Aorta (tissue), 5 donors: ENCODE measurements at regions of chr7 and their contacts with region 1.

Region 1: GRCh38 chr7:100691676-100692577 is 2.1 kb downstream of the GIGYF1 start:
- DNase-seq: peak; percentile 83 to 94
- ATAC-seq: peak; percentile 87
- H3K4me3 ChIP-seq: no peak overlapping the region
- H3K27ac ChIP-seq: no peak overlapping the region
- H3K4me1 ChIP-seq: no peaks in the 10 kb centered on the region
- H3K27me3 ChIP-seq: no peaks in the 10 kb centered on the region

Region 2: GRCh38 chr7:99975782-99976521 is 716.0 kb before region 1 on chr7 and contains the start of gene AZGP1:
- intact Hi-C with region 1: no loop called
- DNase-seq: no peak
- ATAC-seq: no peak
- H3K4me3 ChIP-seq: no peak within 1 kb of the TSS
- H3K27ac ChIP-seq: no peak within 1 kb of the TSS
- H3K4me1 ChIP-seq: no peaks in the 10 kb centered on the region
- H3K27me3 ChIP-seq: no peaks in the 10 kb centered on the region
- total RNA-seq, gene AZGP1: 0.63 to 1.3 TPM

Region 3: GRCh38 chr7:100469227-100470044 is 222.5 kb before region 1 on chr7:
- intact Hi-C with region 1: loop called (anchors 5 kb)
- DNase-seq: peak; percentile 91 to 97
- ATAC-seq: peak; percentile 91
- H3K4me3 ChIP-seq: no peak overlapping the region
- H3K27ac ChIP-seq: no peak overlapping the region
- H3K4me1 ChIP-seq: no peaks in the 10 kb centered on the region
- H3K27me3 ChIP-seq: no peaks in the 10 kb centered on the region

Region 4: DNA sequence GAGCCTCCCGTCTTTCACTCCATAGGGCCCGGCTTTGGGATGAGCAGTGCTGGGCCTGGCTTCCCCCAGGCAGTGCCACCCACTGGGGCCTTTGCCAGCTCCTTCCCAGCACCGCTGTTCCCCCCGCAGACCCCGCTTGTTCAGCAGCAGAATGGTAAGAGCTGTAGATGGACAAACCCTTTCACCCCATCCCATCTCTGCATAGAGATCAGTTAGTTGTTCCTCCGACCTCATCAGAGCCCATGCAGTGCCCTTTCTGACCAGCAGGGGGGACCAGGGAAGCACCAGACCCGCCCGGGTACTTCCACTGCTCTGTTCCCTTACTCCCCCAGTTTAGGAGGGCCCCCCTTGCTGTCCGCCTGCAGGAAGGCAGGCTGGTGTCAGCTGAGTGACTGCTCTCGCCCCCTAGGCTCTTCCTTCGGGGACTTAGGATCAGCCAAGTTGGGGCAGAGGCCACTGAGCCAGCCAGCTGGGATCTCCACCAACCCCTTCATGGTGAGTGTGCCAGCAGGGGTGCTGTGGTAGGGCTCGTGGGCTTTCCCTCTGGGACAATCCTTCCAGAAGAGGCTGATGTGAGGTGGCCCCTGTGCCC is 128.0 kb before region 1 on chr7:
- intact Hi-C with region 1: loop called (anchors 2 kb)
- DNase-seq: peak; percentile 88 to 95
- ATAC-seq: peak; percentile 79
- H3K4me3 ChIP-seq: no peak overlapping the region
- H3K27ac ChIP-seq: no peak overlapping the region
- H3K4me1 ChIP-seq: no peaks in the 10 kb centered on the region
- H3K27me3 ChIP-seq: no peaks in the 10 kb centered on the region

Region 5: DNA sequence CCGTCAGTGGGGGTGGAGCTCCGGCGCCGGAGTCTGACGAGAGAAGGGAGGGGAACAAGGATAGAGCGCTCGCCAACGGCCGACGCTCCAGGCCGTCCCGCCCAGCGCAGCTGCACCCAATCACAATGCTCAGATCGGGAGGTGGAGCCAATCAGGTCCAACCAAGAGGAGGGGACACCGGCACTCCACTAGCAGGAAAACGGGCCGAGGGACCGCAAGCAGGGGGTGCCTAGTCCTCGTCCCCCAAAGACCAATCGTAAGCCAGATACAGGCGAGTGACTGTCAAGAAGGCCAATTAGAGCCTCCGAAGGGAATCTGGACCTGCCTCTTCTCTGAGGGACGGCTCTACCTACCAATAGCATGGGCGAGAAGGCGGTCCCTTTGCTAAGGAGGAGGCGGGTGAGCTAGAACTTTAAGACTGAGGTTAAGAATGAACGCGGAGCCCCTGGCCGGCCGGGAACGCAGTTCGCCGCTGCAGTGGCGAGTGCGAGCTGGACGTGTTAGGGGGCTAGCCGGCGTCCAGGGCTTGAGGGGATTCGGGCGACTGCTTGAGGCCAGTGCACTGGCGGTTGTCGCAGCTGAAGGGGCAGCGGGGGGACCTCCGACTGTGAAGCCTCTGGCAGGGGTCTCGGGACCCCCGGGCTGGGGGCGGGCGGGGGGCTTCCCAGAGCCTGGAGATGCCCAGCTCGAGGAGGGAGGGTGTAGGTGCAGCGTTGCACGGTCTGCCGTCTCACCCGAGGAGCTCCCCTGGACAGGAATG is 105.5 kb before region 1 on chr7 and contains the start of gene FBXO24:
- intact Hi-C with region 1: loop called in 1 of 2 experiments (anchors 5 kb)
- DNase-seq: peak; percentile 100
- ATAC-seq: peak; percentile 98
- H3K4me3 ChIP-seq: peak within 1 kb of the TSS; percentile 57 to 85
- H3K27ac ChIP-seq: peak within 1 kb of the TSS in 1 of 2 donors; percentile 72
- H3K4me1 ChIP-seq: no peaks in the 10 kb centered on the region
- H3K27me3 ChIP-seq: no peaks in the 10 kb centered on the region
- total RNA-seq, gene FBXO24: 0.81 TPM in 1 of 2 donors, not detected in the other

Region 6: GRCh38 chr7:100611974-100612729 is 79.8 kb before region 1 on chr7 and contains the start of gene MOSPD3:
- intact Hi-C with region 1: loop called in 1 of 2 experiments (anchors 5 kb)
- DNase-seq: peak; percentile 99 to 100
- ATAC-seq: peak; percentile 98
- H3K4me3 ChIP-seq: peak within 1 kb of the TSS; percentile 58 to 62
- H3K27ac ChIP-seq: peak within 1 kb of the TSS in 1 of 2 donors; percentile 87
- H3K4me1 ChIP-seq: no peaks in the 10 kb centered on the region
- H3K27me3 ChIP-seq: no peaks in the 10 kb centered on the region
- total RNA-seq, gene MOSPD3: 15.1 to 19.1 TPM

Region 7: DNA sequence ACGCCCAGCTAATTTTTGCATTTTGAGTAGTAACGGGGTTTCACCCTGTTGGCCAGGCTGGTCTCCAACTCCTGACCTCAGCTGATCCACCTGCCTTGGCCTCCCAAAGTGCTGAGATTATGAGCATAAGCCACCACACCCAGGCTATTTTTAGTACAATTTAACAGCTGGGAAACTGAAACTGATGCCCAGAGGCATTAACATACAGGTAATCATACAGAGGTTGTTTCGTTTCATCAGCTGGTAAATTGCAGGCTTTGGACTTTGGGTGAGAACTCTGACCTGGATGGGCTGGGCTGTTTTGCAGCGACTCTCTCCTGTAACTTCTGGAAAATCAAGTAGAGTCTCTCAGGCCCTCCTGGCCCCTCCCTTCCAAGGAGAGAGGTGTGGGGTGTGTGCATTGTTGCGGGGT is 210.0 kb after region 1 on chr7:
- intact Hi-C with region 1: no loop called
- DNase-seq: no peak
- ATAC-seq: no peak
- H3K4me3 ChIP-seq: no peak overlapping the region
- H3K27ac ChIP-seq: no peak overlapping the region
- H3K4me1 ChIP-seq: no peaks in the 10 kb centered on the region
- H3K27me3 ChIP-seq: no peaks in the 10 kb centered on the region

Region 8: GRCh38 chr7:101743241-101743994 is 1051.5 kb after region 1 on chr7:
- intact Hi-C with region 1: no loop called
- DNase-seq: peak; percentile 64 to 85
- ATAC-seq: peak; percentile 50
- H3K4me3 ChIP-seq: peak overlapping the region; percentile 2 to 56
- H3K27ac ChIP-seq: no peak overlapping the region
- H3K4me1 ChIP-seq: no peaks in the 10 kb centered on the region
- H3K27me3 ChIP-seq: no peaks in the 10 kb centered on the region